CD4-positive, alpha-beta memory T cell (primary cell): ENCODE measurements at regions of chr6 and their contacts with region 1.

Region 1: DNA sequence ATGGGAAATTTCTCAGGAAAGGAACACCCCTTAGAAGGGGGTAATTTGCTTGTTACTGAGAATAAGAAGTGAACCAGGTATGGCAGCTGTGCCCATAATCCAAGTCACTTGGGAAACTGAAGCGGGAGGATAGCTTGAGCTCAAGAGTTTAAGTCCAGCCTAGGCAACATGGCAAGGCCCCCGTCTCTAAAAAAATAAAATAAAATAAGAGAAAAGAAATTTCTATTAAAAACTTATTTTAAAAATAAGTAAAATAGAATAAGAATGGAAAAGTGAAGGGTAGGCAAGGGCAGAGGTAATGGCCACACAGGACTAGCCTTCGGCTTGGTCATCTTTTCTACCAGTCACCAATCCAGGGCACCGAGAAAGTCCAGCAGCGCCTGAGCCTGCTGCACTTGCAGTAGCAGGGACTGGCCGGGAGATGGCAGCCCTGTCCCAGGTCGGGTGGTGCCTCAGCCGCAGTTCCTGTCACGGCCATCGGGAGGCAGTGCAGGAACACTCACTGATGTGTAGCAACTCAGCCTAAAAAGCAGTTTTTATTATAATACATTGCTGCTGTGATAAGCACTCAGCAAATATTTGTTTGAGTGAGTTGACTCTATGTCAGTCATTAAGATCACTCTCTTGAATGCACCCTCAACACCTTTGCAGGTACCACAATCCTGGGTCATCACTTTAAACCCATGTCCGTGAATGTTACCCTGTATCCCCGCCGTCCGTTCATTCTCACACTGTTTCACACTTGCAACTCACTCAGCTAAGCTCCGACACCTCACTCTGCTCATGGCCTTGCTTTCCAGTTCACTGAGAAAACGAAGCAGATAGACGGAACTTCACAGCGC is 23.2 kb upstream of the GCM1 start:
- DNase-seq: peak; percentile 83 to 90 (median 85)
- H3K4me3 ChIP-seq: no peak overlapping the region
- H3K4me3 Mint-ChIP-seq: no peak overlapping the region
- H3K27ac ChIP-seq: no peak overlapping the region
- H3K27ac Mint-ChIP-seq: no peak overlapping the region
- H3K4me1 ChIP-seq: no peaks in the 10 kb centered on the region
- H3K4me1 Mint-ChIP-seq: no peaks in the 10 kb centered on the region
- H3K27me3 ChIP-seq: no peaks in the 10 kb centered on the region
- H3K27me3 Mint-ChIP-seq: no peaks in the 10 kb centered on the region

Region 2: GRCh38 chr6:52670502-52671409 is 501.1 kb before region 1 on chr6 and contains the start of gene TMEM14A:
- CTCF ChIA-PET with region 1: no interaction called
- POLR2A ChIA-PET with region 1: no interaction called
- intact Hi-C with region 1: no loop called
- DNase-seq: peak; percentile 89 to 90 (median 89)
- H3K4me3 ChIP-seq: peak within 1 kb of the TSS; percentile 37 to 84
- H3K4me3 Mint-ChIP-seq: peak within 1 kb of the TSS; percentile 89 to 95 (median 92)
- H3K27ac ChIP-seq: peak within 1 kb of the TSS; percentile 50
- H3K27ac Mint-ChIP-seq: peak within 1 kb of the TSS; percentile 2 to 97 (median 89)
- H3K4me1 ChIP-seq: peaks cover 25% of the 10 kb centered on the region
- H3K4me1 Mint-ChIP-seq: peaks cover 23 to 32% (median 27%) of the 10 kb centered on the region in 4 donors
- H3K27me3 ChIP-seq: no peaks in the 10 kb centered on the region
- H3K27me3 Mint-ChIP-seq: peaks cover 0 to 2% of the 10 kb centered on the region in 2 donors
- total RNA-seq, gene TMEM14A: 9.5 to 10.0 TPM

Region 3: GRCh38 chr6:52946306-52946705 is 225.5 kb before region 1 on chr6:
- CTCF ChIA-PET with region 1: no interaction called
- POLR2A ChIA-PET with region 1: no interaction called
- intact Hi-C with region 1: no loop called
- DNase-seq: no peak
- H3K4me3 ChIP-seq: no peak overlapping the region
- H3K4me3 Mint-ChIP-seq: no peak overlapping the region
- H3K27ac ChIP-seq: no peak overlapping the region
- H3K27ac Mint-ChIP-seq: peak overlapping the region in 1 of 7 donors; percentile 2
- H3K4me1 ChIP-seq: no peaks in the 10 kb centered on the region
- H3K4me1 Mint-ChIP-seq: peaks cover 0 to 6% (median 4%) of the 10 kb centered on the region in 4 donors
- H3K27me3 ChIP-seq: no peaks in the 10 kb centered on the region
- H3K27me3 Mint-ChIP-seq: peaks cover 10 to 20% of the 10 kb centered on the region in 2 donors

Region 4: DNA sequence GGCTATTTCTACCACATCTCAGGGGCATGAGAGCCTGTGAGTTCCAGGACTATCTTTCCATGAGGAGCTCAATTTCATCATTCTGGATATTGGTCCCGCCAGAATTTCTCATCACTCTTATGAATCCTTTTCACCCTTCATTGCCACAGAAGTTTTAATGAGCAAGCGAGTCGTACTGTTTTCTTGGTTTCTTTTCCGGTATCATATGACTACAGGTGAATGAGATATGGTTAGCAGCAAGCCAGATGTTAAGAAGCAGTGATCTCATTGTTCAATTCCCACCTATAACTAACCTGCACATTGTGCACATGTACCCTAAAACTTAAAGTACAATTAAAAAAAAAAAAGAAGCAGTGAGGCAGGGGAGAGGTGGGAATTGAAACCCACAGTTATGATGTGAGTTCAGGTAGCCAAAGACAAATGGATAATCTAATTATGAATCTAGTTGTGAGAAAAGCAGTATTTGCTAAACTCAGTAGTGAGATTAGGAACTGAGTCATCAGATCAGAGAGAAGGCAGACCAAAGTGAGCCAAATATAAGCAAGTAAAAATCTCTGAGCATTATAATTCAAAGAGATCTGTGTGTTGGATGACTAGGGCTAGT is 254.9 kb after region 1 on chr6:
- CTCF ChIA-PET with region 1: interaction called, 13 read pairs
- POLR2A ChIA-PET with region 1: no interaction called
- intact Hi-C with region 1: no loop called
- DNase-seq: no peak
- H3K4me3 ChIP-seq: no peak overlapping the region
- H3K4me3 Mint-ChIP-seq: peak overlapping the region in 7 of 8 donors; percentile 5 to 77 (median 40)
- H3K27ac ChIP-seq: no peak overlapping the region
- H3K27ac Mint-ChIP-seq: peak overlapping the region in 3 of 7 donors; percentile 18 to 60 (median 33)
- H3K4me1 ChIP-seq: peaks cover 8% of the 10 kb centered on the region
- H3K4me1 Mint-ChIP-seq: peaks cover 9 to 21% (median 15%) of the 10 kb centered on the region in 4 donors
- H3K27me3 ChIP-seq: peaks cover 5% of the 10 kb centered on the region
- H3K27me3 Mint-ChIP-seq: peaks cover 0 to 2% of the 10 kb centered on the region in 2 donors

Region 5: DNA sequence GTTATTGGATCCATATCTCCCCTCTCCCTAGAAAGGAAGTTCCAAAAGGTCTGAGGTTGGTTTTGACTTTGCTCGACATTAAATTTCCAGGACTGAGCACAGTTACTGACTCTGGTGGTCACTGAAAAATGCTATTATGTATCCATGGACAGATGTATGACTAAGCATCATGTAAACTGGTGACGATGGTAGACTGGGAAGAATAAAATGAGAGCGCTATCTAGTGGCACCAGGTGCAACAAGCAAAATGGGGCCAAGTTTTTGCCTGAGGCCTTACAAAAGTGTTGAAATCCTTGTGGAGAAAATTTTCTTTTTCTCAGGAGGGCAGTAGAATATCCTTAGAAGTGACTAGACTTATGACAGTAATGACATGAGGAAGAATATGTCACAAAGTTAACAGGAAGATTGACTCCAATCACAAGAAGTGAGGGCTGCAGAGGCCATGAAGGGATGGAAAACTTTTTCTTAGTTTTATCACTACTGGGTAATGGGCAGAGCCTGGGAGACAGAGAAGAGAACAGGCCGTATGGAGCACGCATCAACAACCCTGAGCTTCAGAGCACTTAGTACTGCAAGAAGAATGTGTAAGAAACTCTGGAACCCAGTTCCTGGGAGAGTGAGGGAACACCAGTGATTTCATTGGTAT is 265.9 kb after region 1 on chr6:
- CTCF ChIA-PET with region 1: interaction called, 119 read pairs
- POLR2A ChIA-PET with region 1: interaction called, 3 read pairs
- intact Hi-C with region 1: loop called (anchors 1 kb)
- DNase-seq: peak in 4 of 5 donors; percentile 20 to 38 (median 22)
- H3K4me3 ChIP-seq: no peak overlapping the region
- H3K4me3 Mint-ChIP-seq: no peak overlapping the region
- H3K27ac ChIP-seq: no peak overlapping the region
- H3K27ac Mint-ChIP-seq: no peak overlapping the region
- H3K4me1 ChIP-seq: no peaks in the 10 kb centered on the region
- H3K4me1 Mint-ChIP-seq: peaks cover 0 to 2% (median 0%) of the 10 kb centered on the region in 4 donors
- H3K27me3 ChIP-seq: no peaks in the 10 kb centered on the region
- H3K27me3 Mint-ChIP-seq: peaks cover 0 to 12% of the 10 kb centered on the region in 2 donors